ENCODE measurements at regions of chr2 and their contacts with region 1.

Region 1: GRCh38 chr2:19711470-19712372 is 190.1 kb downstream of the TTC32 start:
- DNase-seq: peak; percentile 97
- H3K4me3 ChIP-seq: no peak overlapping the region
- H3K27ac ChIP-seq: peak overlapping the region; percentile 72
- H3K4me1 ChIP-seq: peaks cover 10% of the 10 kb centered on the region
- H3K27me3 ChIP-seq: no peaks in the 10 kb centered on the region
- CTCF ChIP-seq: no peak

Region 2: GRCh38 chr2:19801367-19802080 is 89.8 kb after region 1 on chr2:
- CTCF ChIA-PET with region 1: no interaction called
- dilution Hi-C with region 1: no loop called
- in situ Hi-C with region 1: no loop called
- intact Hi-C with region 1: loop called (anchors 5 kb)
- DNase-seq: peak; percentile 94
- H3K4me3 ChIP-seq: no peak overlapping the region
- H3K27ac ChIP-seq: no peak overlapping the region
- H3K4me1 ChIP-seq: peaks cover 35% of the 10 kb centered on the region
- H3K27me3 ChIP-seq: peaks cover 4% of the 10 kb centered on the region
- CTCF ChIP-seq: no peak

Measured in mammary epithelial cell (primary cell).